ENCODE measurements at regions of chr5 and their contacts with region 1.

Region 1: DNA sequence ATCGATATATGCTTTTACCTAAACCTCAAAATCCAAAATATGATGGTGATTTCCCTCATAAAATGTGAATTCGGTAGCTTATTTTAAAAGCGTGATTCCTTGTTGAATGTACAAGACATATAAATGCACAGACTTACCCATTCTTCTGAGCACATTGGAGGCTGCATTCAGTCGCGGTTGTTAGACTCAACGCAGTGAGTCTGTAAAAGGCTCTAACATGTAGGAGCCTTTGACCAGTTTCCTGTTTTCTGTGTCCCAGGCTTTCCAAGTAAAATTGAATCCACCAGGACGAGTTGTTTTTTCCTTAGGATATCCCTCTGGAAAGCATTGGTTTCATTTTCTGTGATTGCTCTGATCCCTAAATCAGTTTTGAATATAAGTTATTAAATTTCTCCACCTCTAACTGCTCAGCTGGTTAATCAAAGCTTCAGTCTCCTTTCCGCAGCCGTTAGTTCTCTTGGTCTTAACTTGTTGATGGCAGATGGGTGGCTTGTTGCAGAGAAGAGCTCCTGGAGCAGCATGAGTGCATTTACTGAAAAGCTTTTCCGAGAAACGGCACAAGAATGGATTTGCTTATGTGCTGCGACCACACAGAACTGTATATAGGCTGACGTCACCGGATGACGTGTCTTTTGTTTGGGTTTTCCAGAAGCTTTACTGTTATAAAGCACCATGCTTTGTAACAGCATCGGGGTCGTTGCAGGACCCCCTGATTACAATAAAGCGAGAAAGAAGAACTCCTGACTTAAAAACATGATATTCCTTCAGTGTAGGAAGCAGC is at the start of gene LRRTM2:
- DNase-seq: peak; percentile 25 to 93 (median 76)

Region 2: GRCh38 chr5:138927979-138928378 is 53.0 kb after region 1 on chr5:
- intact Hi-C with region 1: loop called (anchors 10 kb)
- DNase-seq: peak; percentile 68 to 95 (median 90)

Region 3: DNA sequence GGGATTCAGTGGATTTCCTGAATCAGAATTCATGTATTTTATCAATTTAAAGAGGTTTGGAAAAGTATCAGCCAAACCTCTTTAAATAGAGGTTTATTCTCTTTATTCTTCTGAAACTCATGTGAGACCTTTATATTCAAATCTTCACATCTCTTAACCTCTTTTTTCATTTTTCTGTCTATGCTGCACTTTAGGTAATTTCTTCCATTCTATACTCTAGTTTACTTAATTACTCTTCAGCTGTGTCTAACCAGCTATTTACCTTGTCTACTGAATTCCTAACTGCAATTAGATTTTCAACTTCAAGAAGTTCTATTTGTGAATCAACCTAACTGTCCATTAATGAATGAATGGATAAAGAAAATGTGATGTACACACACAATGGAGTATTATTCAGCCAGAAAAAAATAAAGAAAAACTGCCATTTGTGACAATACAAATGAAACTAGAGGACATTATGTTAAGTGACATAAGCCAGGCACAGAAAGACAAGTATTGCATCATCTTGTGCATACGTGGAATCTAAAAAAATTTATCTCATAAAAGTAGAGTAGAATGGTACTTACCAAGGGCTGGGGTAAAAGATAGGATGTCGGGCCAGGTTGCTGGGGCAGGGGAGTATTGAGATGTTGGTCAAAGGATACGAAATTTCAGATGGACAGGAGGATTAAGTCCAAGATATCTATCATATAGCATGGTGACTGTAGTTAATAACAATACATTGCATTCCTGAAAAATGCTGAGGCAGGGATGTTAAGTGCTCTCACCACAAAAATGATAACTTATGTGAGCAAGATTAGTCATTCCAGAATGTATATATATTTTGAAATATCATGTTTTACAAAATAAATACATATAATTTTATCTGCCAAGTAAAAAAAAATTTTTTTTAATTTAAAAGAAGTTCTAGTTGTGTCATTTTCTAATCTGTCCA is 129.7 kb after region 1 on chr5:
- intact Hi-C with region 1: no loop called
- DNase-seq: no peak

Region 4: GRCh38 chr5:139104577-139105276 is 229.8 kb after region 1 on chr5:
- intact Hi-C with region 1: loop called (anchors 10 kb)
- DNase-seq: peak in 40 of 42 donors; percentile 43 to 93 (median 74)